ENCODE measurements at regions of chr1 and their contacts with region 1.

Region 1: DNA sequence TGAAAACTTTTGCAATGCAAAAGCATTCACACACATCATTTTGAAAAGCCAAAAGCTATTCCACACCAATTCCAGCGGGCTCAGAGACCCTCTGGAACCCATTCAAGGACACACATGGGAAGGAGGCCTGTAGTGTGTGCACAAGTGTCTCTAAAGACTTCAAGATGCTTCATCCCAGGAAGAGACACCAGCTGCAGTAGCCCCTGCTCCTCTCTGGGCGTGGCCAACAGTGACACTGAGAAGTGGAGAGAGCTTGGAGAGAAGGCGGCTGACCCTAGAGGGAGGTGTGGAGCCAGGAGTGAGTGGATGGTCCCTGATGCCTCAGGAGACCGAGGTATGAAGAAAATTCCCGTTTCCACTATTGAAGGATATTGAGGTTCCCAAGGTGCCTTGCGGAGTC is 14.9 kb upstream of the TNNI1 start:
- DNase-seq: peak; percentile 72
- ATAC-seq: peak; percentile 97
- H3K4me3 Mint-ChIP-seq: no peak overlapping the region; the same call in 1 of the 2 replicates
- H3K27ac Mint-ChIP-seq: no peak overlapping the region; the same call in 1 of the 2 replicates
- H3K4me1 Mint-ChIP-seq: peaks cover 19% of the 10 kb centered on the region
- H3K27me3 Mint-ChIP-seq: no peaks in the 10 kb centered on the region; the same call in 1 of the 2 replicates
- CTCF ChIP-seq: no peak

Region 2: GRCh38 chr1:200979574-200980451 is 456.6 kb before region 1 on chr1:
- CTCF ChIA-PET with region 1: no interaction called
- POLR2A ChIA-PET with region 1: no interaction called
- DNase-seq: peak; percentile 90
- ATAC-seq: peak; percentile 97
- H3K4me3 Mint-ChIP-seq: no peak overlapping the region
- H3K27ac Mint-ChIP-seq: no peak overlapping the region
- H3K4me1 Mint-ChIP-seq: no peaks in the 10 kb centered on the region
- H3K27me3 Mint-ChIP-seq: no peaks in the 10 kb centered on the region; the same call in 1 of the 2 replicates
- CTCF ChIP-seq: peak; percentile 87

Region 3: DNA sequence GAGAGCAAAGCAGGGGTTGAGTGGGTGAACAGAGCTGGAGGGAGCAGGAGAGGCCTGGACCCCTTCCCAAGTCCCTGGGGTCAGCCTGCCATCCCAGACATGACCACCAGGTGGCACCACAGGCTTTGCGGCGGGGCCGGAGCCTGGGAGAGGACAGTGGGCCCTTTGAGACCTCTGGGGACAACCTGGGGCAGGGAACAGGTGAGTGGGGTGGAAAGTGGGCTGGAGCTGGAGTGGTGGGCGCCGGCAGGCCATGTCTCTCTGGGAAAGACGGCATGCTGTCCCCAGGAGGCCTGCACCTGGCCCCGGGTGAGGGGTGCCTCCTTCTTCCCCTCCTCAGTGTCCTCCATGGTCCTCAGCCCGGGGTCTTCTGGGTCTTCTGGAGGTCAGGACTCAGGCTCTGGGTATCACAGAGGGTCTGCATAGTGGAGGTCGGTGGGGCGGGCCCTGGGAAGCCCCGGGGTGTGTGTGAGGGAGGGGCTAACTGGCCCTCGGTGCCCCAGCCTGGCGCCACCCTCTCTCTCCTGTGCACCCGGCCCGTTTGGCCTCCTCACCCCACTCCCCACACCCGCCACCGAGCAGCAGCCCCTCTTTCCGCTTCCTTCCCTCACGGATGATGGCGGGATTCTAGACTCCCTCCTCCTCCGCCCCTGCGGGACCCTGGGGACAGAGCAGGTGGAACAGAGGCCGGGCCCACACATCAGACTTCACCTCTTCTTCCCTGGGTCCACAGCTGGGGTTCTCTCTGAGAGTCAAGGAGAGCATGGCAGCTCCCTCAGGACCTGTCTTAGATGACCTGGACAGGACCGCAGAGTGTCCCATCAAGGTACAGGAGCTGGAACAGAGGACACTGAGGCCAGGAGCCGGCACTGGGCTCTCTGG is 181.5 kb before region 1 on chr1:
- CTCF ChIA-PET with region 1: interaction called, 10 read pairs
- POLR2A ChIA-PET with region 1: no interaction called
- DNase-seq: peak; percentile 96
- ATAC-seq: peak; percentile 81
- H3K4me3 Mint-ChIP-seq: no peak overlapping the region
- H3K27ac Mint-ChIP-seq: no peak overlapping the region
- H3K4me1 Mint-ChIP-seq: peaks cover 5% of the 10 kb centered on the region; the same call in 1 of the 2 replicates
- H3K27me3 Mint-ChIP-seq: no peaks in the 10 kb centered on the region; the same call in 1 of the 2 replicates
- CTCF ChIP-seq: peak; percentile 99

Region 4: DNA sequence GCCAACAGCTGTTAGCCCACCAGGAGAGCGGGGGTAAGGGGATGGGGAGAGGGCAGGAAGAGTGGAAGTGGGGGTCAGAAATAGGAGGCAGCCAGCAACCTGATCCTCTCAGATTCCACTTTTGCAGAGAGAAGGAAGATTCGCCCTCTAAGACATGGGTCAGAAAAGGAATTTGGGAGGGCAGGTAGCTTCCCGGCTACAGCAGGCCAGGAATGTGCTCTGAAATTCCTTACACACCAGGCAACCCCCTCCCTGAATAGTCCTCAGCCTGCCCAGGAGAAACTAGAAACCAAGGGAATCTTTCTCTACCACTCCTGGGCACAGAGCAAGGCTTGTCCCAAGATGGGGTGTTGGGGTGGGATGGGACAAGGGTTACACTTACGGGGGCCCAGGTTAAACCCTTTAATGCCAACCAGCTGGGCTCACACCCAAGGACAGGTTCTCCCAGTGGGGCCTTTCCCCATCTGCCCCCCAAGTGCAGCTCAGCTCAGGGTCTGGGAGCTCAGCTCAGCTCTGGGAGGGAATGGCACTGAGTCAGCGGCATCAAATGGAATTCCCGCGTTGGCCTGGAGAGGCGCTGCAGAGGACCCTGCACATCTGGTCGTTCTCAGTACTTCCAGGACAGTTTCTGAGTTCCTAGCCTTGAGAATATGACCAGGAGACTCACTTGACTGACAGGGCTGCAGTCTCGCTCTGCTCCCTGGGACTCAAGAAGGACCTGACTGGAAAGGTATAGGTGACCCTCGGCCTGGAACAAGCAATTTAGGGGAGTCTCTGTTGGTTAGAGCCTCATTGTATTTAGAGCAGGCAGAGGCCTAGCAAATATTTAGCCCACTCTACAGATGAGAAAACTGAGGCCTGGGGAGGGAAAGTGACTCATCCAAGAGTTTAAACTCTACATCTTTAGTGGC is 59.7 kb before region 1 on chr1:
- CTCF ChIA-PET with region 1: interaction called, 31 read pairs
- POLR2A ChIA-PET with region 1: no interaction called
- DNase-seq: peak; percentile 86
- ATAC-seq: peak; percentile 81
- H3K4me3 Mint-ChIP-seq: peak overlapping the region; percentile 58
- H3K27ac Mint-ChIP-seq: peak overlapping the region; percentile 98
- H3K4me1 Mint-ChIP-seq: peaks cover 54% of the 10 kb centered on the region
- H3K27me3 Mint-ChIP-seq: peaks cover 7% of the 10 kb centered on the region; the same call in 1 of the 2 replicates
- CTCF ChIP-seq: peak; percentile 56

Region 5: GRCh38 chr1:201414051-201414738 is 22.2 kb before region 1 on chr1:
- CTCF ChIA-PET with region 1: interaction called, 31 read pairs
- POLR2A ChIA-PET with region 1: no interaction called
- DNase-seq: no peak
- ATAC-seq: no peak
- H3K4me3 Mint-ChIP-seq: no peak overlapping the region
- H3K27ac Mint-ChIP-seq: no peak overlapping the region
- H3K4me1 Mint-ChIP-seq: no peaks in the 10 kb centered on the region
- H3K27me3 Mint-ChIP-seq: peaks cover 20% of the 10 kb centered on the region
- CTCF ChIP-seq: no peak

Region 6: GRCh38 chr1:201456499-201457309 is 20.3 kb after region 1 on chr1:
- CTCF ChIA-PET with region 1: interaction called, 31 read pairs
- POLR2A ChIA-PET with region 1: no interaction called
- DNase-seq: no peak
- ATAC-seq: peak; percentile 58
- H3K4me3 Mint-ChIP-seq: no peak overlapping the region
- H3K27ac Mint-ChIP-seq: peak overlapping the region; percentile 35; the same call in 1 of the 2 replicates
- H3K4me1 Mint-ChIP-seq: peaks cover 37% of the 10 kb centered on the region
- H3K27me3 Mint-ChIP-seq: no peaks in the 10 kb centered on the region; the same call in 1 of the 2 replicates
- CTCF ChIP-seq: no peak

Region 7: DNA sequence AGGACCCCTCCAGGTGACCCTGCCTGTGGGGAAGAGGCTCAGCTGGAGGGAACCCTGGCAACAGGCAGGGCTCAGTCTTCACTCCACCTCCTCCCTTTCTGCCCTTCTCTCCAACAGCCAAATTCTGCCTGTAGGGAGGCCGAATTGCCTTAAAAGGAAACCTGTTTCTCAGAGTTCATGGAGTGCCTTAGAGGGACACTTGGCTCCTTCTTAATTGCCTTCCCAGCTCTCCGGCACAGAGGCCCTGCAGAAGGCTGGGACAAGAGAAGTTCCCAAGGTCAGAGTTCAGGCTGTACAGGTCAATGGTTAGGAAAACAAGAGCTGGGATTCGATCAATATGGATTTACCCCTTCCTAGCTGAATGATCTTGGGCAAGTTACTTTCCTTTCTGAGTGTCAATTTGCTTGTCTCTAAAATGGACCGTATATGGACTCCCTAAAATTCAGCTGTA is 64.3 kb after region 1 on chr1:
- CTCF ChIA-PET with region 1: interaction called, 10 read pairs
- POLR2A ChIA-PET with region 1: no interaction called
- DNase-seq: no peak
- ATAC-seq: peak; percentile 16
- H3K4me3 Mint-ChIP-seq: no peak overlapping the region
- H3K27ac Mint-ChIP-seq: peak overlapping the region; percentile 77
- H3K4me1 Mint-ChIP-seq: peaks cover 49% of the 10 kb centered on the region
- H3K27me3 Mint-ChIP-seq: peaks cover 2% of the 10 kb centered on the region
- CTCF ChIP-seq: no peak

Region 8: DNA sequence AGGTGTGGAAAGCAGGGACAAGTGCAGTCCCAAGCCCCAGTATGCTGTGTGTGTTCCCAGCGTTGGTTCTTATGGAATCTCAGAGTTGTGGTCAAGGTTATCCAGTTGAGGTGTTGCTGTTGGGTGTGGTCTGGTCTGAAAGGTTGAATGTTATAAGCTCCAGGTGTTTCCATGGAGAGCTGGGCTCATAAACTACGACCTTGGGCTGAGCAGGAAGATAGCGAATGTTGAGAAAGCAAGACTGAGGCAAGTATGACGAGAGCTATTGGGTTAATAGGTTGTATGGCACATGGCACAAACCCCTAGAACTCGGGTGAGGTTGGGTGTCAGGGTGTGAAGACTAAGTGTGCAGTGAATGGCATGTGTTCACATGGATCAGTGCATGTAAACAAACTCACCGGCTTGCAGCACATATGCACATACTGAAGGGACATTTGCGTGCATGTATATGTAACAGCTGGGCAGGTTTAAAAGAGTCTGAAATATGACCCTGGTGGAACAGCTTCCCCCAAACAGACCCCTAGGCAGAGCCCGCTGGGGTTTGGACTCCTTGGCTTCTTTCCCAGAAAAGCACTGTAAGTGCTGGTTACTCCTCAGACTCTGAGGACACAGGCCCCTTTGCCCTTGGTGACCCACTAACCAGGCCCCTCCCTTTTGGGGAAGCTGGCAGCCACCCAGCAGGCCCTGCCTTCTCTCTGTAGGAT is 220.1 kb after region 1 on chr1:
- CTCF ChIA-PET with region 1: no interaction called
- POLR2A ChIA-PET with region 1: no interaction called
- DNase-seq: no peak
- ATAC-seq: no peak
- H3K4me3 Mint-ChIP-seq: no peak overlapping the region
- H3K27ac Mint-ChIP-seq: peak overlapping the region; percentile 1; the same call in 1 of the 2 replicates
- H3K4me1 Mint-ChIP-seq: peaks cover 42% of the 10 kb centered on the region
- H3K27me3 Mint-ChIP-seq: no peaks in the 10 kb centered on the region; the same call in 1 of the 2 replicates
- CTCF ChIP-seq: no peak

Region 9: GRCh38 chr1:201850053-201850397 is 413.6 kb after region 1 on chr1:
- CTCF ChIA-PET with region 1: no interaction called
- POLR2A ChIA-PET with region 1: no interaction called
- DNase-seq: no peak
- ATAC-seq: no peak
- H3K4me3 Mint-ChIP-seq: no peak overlapping the region
- H3K27ac Mint-ChIP-seq: no peak overlapping the region
- H3K4me1 Mint-ChIP-seq: no peaks in the 10 kb centered on the region
- H3K27me3 Mint-ChIP-seq: no peaks in the 10 kb centered on the region
- CTCF ChIP-seq: no peak

Measured in WTC11 (cell line).